ENCODE measurements at regions of chr16 and their contacts with region 1.

Region 1: GRCh38 chr16:67968400-67969253 is at the start of gene SLC12A4:
- DNase-seq: no peak
- ATAC-seq: peak; percentile 91
- H3K4me3 ChIP-seq: peak within 1 kb of the TSS; percentile 69 to 85
- H3K27ac ChIP-seq: peak within 1 kb of the TSS; percentile 88
- H3K4me1 ChIP-seq: peaks cover 15% of the 10 kb centered on the region
- H3K27me3 ChIP-seq: no peaks in the 10 kb centered on the region
- CTCF ChIP-seq: no peak
- total RNA-seq, gene SLC12A4: 31.8 TPM

Region 2: GRCh38 chr16:66058172-66058691 is 1910.4 kb before region 1 on chr16:
- CTCF ChIA-PET with region 1: no interaction called
- POLR2A ChIA-PET with region 1: no interaction called
- in situ Hi-C with region 1: no loop called
- intact Hi-C with region 1: no loop called
- DNase-seq: no peak
- ATAC-seq: no peak
- H3K4me3 ChIP-seq: no peak overlapping the region
- H3K27ac ChIP-seq: no peak overlapping the region
- H3K4me1 ChIP-seq: no peaks in the 10 kb centered on the region
- H3K27me3 ChIP-seq: no peaks in the 10 kb centered on the region; the same call in 1 of the 2 replicates
- CTCF ChIP-seq: no peak

Region 3: DNA sequence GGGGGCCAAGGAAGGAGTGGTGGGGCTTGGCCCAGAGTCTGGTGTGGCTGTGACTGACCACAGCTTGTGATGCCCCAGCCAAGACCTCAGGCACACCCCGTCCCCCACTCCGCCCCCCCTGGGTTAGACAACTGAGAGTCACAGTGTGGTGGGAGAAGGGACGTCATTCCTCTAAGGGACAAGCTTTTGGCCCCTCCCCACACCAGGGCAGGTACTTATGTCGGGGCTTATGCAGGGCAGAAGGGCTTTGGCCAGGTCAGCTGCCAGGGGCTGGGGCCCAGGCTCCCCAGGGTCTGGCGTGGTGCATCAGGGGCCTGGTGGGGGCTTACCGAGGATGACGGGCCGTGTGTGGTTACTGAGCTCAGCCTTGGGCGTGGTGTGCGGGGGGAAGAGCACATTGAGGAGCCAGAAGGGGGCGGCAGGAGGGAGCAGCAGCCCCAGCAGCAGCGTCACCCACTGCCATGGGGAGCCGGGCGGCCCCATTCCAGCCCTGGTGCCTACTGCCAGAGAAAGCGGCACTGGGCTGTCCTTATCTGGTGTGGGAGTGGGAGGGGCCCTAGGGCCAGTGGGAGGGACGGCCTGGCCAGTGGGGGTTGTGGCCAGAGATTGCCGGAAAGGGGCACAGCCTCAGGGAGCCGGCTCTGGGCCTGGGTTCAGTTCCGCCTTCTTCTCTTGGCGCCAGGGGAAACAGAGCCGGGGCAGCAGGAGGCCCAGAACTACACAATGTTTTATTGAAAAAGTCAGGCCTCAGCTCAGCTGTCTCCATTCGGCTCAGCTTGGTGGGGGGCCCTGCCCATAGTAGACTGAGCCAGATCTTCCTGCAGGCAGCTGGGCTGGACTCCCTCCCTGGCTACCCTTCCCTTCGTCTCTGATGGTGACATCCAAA is 24.8 kb before region 1 on chr16 and contains the start of gene LCAT:
- CTCF ChIA-PET with region 1: interaction called, 12 read pairs
- POLR2A ChIA-PET with region 1: interaction called, 3 read pairs
- in situ Hi-C with region 1: no loop called
- intact Hi-C with region 1: no loop called
- DNase-seq: no peak
- ATAC-seq: peak; percentile 37; the same call in 1 of the 2 replicates
- H3K4me3 ChIP-seq: no peak within 1 kb of the TSS
- H3K27ac ChIP-seq: no peak within 1 kb of the TSS
- H3K4me1 ChIP-seq: no peaks in the 10 kb centered on the region; the same call in 1 of the 2 replicates
- H3K27me3 ChIP-seq: no peaks in the 10 kb centered on the region
- CTCF ChIP-seq: no peak
- total RNA-seq, gene LCAT: 14.0 TPM

Region 4: DNA sequence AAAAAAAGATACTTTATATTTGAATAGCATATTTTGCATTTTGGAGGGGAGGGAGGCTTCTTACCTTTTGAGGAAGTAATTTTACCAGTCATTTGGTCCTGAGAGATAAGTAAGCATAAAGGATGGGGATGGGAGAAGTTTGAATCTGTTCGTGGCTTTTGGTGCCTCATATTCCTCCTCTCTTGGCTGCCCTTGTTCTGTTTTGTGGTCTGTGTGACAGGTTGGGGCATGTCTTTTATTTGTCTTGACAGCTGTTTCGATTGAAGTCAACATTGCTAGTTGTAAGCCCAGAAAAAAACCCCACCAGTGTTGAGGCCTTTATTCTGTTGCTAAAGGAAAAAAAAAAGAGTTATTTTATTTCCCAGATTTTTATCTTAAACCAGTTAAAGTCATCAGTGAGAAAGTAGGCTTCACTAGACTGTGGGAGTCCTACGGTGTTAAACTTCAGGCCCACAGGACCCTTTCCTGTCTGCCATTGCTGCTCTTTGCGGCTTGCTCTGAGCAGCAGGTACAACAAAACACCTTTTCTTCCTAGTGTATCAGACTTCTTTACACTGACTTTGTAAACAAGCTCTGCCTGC is 307.1 kb after region 1 on chr16:
- CTCF ChIA-PET with region 1: no interaction called
- POLR2A ChIA-PET with region 1: interaction called, 19 read pairs
- in situ Hi-C with region 1: no loop called
- intact Hi-C with region 1: no loop called
- DNase-seq: no peak
- ATAC-seq: no peak
- H3K4me3 ChIP-seq: no peak overlapping the region
- H3K27ac ChIP-seq: no peak overlapping the region
- H3K4me1 ChIP-seq: no peaks in the 10 kb centered on the region
- H3K27me3 ChIP-seq: no peaks in the 10 kb centered on the region
- CTCF ChIP-seq: no peak